ENCODE measurements at regions of chr9 and their contacts with region 1.

Region 1: DNA sequence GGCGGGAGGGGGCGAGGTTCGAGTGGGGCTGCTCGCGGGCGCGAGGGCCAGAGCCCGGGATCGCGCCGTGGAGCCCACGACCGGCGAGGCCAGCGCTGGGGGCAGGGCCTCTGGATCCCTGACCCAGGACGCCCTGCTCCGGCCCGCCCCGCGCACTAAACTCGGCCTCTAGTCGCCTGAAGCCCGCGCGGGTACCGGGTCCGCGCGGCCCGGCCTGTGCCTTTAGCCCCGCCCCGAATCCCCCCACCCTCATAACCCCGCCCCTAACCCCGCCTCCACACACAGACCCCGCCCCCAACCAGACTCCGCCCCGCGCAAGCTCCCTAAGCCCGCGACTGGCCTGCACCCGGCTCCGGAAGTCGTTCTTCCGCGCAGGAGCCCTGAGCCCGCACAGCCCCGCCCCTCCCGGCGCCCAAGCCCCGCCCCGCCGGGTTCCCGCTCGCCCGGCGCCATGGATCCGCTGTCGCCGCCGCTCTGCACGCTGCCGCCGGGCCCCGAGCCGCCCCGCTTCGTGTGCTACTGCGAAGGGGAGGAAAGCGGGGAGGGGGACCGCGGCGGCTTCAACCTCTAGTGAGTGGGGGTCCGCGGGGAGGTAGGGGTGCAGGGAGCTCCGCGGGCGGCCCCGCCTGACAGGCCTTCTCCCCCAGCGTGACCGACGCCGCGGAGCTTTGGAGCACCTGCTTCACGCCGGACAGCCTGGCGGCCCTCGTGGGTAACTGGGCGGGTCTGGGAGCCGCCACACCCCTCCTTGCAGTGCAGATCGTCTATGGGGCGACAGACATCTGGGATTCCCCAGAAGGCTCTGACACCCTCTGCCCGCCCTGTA is at the start of gene PAXX:
- DNase-seq: peak; percentile 98
- ATAC-seq: peak; percentile 95
- H3K4me3 Mint-ChIP-seq: peak within 1 kb of the TSS; percentile 81
- H3K27ac Mint-ChIP-seq: peak within 1 kb of the TSS; percentile 70
- H3K4me1 Mint-ChIP-seq: peaks cover 22% of the 10 kb centered on the region
- H3K27me3 Mint-ChIP-seq: peaks cover 4% of the 10 kb centered on the region
- total RNA-seq, gene PAXX: 52.7 to 67.1 TPM

Region 2: DNA sequence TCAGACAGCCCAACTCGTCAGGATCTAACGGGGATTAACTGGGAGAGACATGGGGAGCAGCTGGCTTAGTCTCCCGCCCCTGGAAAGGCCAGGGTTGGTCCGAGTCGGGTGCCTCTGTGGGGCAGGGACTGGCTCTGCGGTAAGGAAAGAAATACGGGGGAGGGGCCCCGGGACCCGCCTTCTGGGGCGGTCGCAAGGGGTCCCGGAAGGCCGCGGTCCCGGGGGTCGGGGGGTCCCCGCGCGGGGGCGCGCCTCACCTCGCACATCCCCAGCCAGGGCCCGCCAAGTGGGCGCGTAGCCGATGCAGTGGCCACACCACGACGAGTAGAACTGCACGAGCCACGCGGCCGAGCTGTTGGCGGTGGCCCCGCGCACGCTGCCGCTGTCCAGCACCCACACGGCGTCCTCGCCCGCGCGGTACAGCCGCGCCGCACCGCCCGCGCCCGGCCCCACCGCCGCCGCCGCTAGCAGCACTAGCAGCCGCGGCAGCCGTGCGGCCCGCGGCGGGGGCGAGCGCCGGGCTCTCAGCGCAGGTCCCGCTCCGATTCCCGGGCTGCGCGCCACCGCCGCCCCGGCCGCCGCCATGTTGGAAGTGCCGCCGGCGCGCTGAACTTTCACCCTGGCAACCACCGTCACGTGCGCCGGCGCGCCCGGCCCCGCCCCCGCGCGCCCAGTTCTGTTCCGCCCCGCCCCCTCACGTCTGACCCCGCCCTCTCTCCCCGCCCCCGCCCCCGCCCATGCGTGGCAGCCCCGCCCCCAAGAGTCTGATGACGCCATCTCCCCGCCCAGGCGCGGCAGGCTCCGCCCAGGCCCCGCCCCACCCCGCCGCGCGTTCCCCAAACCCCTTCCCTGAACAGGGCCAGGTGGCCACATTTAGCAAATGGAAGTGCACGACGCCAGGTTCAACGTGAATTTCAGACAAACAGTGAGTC is 746.7 kb before region 1 on chr9 and contains the start of gene QSOX2:
- CTCF ChIA-PET with region 1: no interaction called
- POLR2A ChIA-PET with region 1: no interaction called
- intact Hi-C with region 1: loop called in 1 of 2 experiments (anchors 2 kb)
- DNase-seq: peak; percentile 94
- ATAC-seq: peak; percentile 61
- H3K4me3 Mint-ChIP-seq: peak within 1 kb of the TSS; percentile 85
- H3K27ac Mint-ChIP-seq: peak within 1 kb of the TSS; percentile 95
- H3K4me1 Mint-ChIP-seq: peaks cover 28% of the 10 kb centered on the region
- H3K27me3 Mint-ChIP-seq: no peaks in the 10 kb centered on the region
- total RNA-seq, gene QSOX2: 18.1 to 21.2 TPM

Region 3: GRCh38 chr9:136865735-136866103 is 126.5 kb before region 1 on chr9:
- CTCF ChIA-PET with region 1: interaction called, 4 read pairs
- POLR2A ChIA-PET with region 1: no interaction called
- intact Hi-C with region 1: loop called in 1 of 2 experiments (anchors 1 kb)
- DNase-seq: no peak
- ATAC-seq: no peak
- H3K4me3 Mint-ChIP-seq: peak overlapping the region; percentile 81
- H3K27ac Mint-ChIP-seq: peak overlapping the region; percentile 38
- H3K4me1 Mint-ChIP-seq: peaks cover 16% of the 10 kb centered on the region
- H3K27me3 Mint-ChIP-seq: no peaks in the 10 kb centered on the region

Region 4: GRCh38 chr9:136949817-136950655 is 42.2 kb before region 1 on chr9:
- CTCF ChIA-PET with region 1: no interaction called
- POLR2A ChIA-PET with region 1: no interaction called
- intact Hi-C with region 1: loop called (anchors 1 to 5 kb)
- DNase-seq: peak; percentile 98
- ATAC-seq: peak; percentile 98
- H3K4me3 Mint-ChIP-seq: peak overlapping the region; percentile 78
- H3K27ac Mint-ChIP-seq: peak overlapping the region; percentile 78
- H3K4me1 Mint-ChIP-seq: peaks cover 2% of the 10 kb centered on the region
- H3K27me3 Mint-ChIP-seq: no peaks in the 10 kb centered on the region

Region 5: GRCh38 chr9:137021979-137022619 is 29.9 kb after region 1 on chr9:
- CTCF ChIA-PET with region 1: interaction called, 4 read pairs
- POLR2A ChIA-PET with region 1: interaction called, 3 read pairs
- intact Hi-C with region 1: loop called in 1 of 2 experiments (anchors 1 kb)
- DNase-seq: peak; percentile 93
- ATAC-seq: peak; percentile 97
- H3K4me3 Mint-ChIP-seq: no peak overlapping the region
- H3K27ac Mint-ChIP-seq: no peak overlapping the region
- H3K4me1 Mint-ChIP-seq: peaks cover 3% of the 10 kb centered on the region
- H3K27me3 Mint-ChIP-seq: no peaks in the 10 kb centered on the region

Region 6: DNA sequence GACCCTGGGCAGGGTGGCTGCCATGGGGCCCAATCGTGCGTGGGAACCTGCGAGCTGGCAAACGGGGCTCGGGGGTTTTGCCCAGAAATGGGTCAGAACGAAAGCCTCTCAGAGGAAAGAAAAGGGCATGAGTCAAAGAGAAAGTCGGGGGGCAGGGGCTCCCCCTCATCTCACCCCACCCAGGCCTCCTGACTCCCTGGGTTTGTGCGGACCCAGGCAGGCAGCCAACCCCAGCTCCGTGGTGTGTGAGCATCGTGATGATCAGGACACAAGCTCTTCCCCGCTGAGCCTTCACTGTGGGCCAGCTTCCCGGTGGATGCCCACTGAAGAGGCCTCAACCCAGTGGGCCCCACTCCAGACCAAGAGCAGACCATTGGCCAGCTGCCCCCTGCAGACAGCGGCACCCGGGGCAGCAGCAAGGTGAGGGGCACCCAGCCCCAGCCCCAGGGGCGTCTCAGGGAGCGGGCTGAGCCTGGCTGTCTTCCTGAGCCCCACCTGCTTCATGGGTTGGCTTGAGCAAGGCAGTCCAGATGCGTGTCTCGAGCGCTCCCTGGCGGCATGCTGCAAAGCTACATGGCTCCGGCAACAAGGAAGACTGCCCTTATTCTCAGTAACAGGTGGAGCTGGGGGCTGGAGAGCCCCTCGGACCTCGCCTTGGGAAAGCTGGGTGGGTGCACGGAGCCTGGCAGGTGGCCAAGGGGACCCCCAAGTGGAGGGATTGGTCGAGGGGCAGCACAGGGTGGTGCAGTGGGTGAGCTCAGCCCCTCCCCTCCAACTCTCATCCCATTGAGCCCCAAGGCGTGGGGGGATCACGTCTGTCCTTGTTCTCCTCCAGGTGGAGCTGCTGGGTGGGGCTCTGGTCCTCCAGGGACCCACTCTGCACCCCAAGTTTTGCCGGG is 42.9 kb after region 1 on chr9:
- CTCF ChIA-PET with region 1: interaction called, 11 read pairs
- POLR2A ChIA-PET with region 1: interaction called, 3 read pairs
- intact Hi-C with region 1: no loop called
- DNase-seq: peak; percentile 96
- ATAC-seq: peak; percentile 80
- H3K4me3 Mint-ChIP-seq: peak overlapping the region; percentile 66
- H3K27ac Mint-ChIP-seq: peak overlapping the region; percentile 83
- H3K4me1 Mint-ChIP-seq: peaks cover 36% of the 10 kb centered on the region
- H3K27me3 Mint-ChIP-seq: no peaks in the 10 kb centered on the region

Region 7: GRCh38 chr9:137150617-137151457 is 158.6 kb after region 1 on chr9:
- CTCF ChIA-PET with region 1: no interaction called
- POLR2A ChIA-PET with region 1: no interaction called
- intact Hi-C with region 1: loop called in 1 of 2 experiments (anchors 1 kb)
- DNase-seq: peak; percentile 90
- ATAC-seq: peak; percentile 80
- H3K4me3 Mint-ChIP-seq: no peak overlapping the region
- H3K27ac Mint-ChIP-seq: no peak overlapping the region
- H3K4me1 Mint-ChIP-seq: peaks cover 8% of the 10 kb centered on the region
- H3K27me3 Mint-ChIP-seq: peaks cover 8% of the 10 kb centered on the region